Caco-2 (cell line): ENCODE measurements at regions of chr19 and their contacts with region 1.

Region 1: DNA sequence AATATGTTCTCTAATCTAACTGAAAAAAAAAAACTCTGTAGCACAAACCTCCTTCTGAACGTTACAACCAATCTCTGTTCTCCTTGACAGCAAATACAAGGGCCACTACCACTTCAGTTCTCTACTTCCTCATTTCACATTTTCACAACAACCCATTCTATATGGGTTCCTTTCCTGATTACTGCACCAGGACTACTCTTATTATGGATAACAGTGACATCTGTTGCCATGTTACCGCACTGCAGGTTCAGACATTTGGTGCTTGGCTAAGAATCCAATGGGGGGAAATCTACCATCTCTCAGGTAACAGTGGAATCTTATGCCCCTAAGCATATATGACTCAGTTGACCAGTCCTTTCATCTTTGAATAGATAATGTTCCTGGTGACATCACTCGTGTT is 11.6 kb upstream of the FPR3 start:
- DNase-seq: peak in 1 of 2 experiments; percentile 7
- H3K4me3 ChIP-seq: no peak overlapping the region
- H3K4me3 Mint-ChIP-seq: no peak overlapping the region
- H3K27ac Mint-ChIP-seq: no peak overlapping the region
- H3K4me1 ChIP-seq: no peaks in the 10 kb centered on the region
- H3K4me1 Mint-ChIP-seq: no peaks in the 10 kb centered on the region
- H3K27me3 ChIP-seq: no peaks in the 10 kb centered on the region
- H3K27me3 Mint-ChIP-seq: no peaks in the 10 kb centered on the region
- CTCF ChIP-seq: no peak

Region 2: DNA sequence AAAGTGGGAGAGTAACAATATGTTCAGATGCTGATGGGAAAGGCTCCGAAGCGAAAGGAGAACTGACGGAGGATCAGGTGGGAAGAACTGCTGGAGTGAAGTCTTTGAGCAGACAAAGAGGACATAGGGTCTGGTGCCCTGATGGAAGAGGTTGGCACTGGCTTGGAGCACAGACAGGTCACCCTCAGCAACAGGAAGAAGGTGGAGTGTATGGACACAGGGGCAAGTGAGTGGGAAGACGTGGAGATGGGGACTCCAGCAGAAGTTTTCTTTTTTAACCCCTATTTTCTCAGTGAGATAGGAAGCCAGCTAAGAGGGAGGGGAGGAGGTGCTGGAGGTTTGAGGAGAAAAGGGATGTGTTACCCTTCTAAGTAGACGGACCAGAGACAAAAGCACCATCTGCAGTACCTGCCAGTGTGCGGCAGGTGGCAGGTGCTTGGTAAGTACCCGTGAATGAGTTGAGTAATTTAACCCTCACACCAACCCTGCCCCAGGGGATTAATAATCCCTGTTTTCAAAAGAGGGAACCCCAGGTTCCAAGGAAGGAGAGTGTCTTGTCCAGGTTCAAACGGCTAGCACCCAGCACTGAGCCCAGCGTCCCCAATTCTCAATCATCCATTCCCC is 70.8 kb before region 1 on chr19:
- CTCF ChIA-PET with region 1: no interaction called
- POLR2A ChIA-PET with region 1: no interaction called
- intact Hi-C with region 1: loop called (anchors 2 kb)
- DNase-seq: no peak
- H3K4me3 ChIP-seq: no peak overlapping the region
- H3K4me3 Mint-ChIP-seq: no peak overlapping the region
- H3K27ac Mint-ChIP-seq: no peak overlapping the region
- H3K4me1 ChIP-seq: no peaks in the 10 kb centered on the region
- H3K4me1 Mint-ChIP-seq: no peaks in the 10 kb centered on the region
- H3K27me3 ChIP-seq: no peaks in the 10 kb centered on the region
- H3K27me3 Mint-ChIP-seq: peaks cover 11% of the 10 kb centered on the region
- CTCF ChIP-seq: peak; percentile 14 to 54